ENCODE measurements at regions of chr10 and their contacts with region 1.

Region 1: GRCh38 chr10:61992671-61993668 is 91.5 kb downstream of the ARID5B start:
- DNase-seq: peak; percentile 86
- ATAC-seq: peak; percentile 77
- H3K4me3 ChIP-seq: peak overlapping the region in 1 of 5 experiments; percentile 42
- H3K4me3 Mint-ChIP-seq: peak overlapping the region; percentile 73
- H3K27ac ChIP-seq: peak overlapping the region; percentile 74 to 80
- H3K27ac Mint-ChIP-seq: peak overlapping the region; percentile 92
- H3K4me1 ChIP-seq: peaks cover 48 to 58% of the 10 kb centered on the region in 2 donors
- H3K4me1 Mint-ChIP-seq: peaks cover 85% of the 10 kb centered on the region
- H3K27me3 ChIP-seq: no peaks in the 10 kb centered on the region
- H3K27me3 Mint-ChIP-seq: no peaks in the 10 kb centered on the region
- CTCF ChIP-seq: no peak

Region 2: DNA sequence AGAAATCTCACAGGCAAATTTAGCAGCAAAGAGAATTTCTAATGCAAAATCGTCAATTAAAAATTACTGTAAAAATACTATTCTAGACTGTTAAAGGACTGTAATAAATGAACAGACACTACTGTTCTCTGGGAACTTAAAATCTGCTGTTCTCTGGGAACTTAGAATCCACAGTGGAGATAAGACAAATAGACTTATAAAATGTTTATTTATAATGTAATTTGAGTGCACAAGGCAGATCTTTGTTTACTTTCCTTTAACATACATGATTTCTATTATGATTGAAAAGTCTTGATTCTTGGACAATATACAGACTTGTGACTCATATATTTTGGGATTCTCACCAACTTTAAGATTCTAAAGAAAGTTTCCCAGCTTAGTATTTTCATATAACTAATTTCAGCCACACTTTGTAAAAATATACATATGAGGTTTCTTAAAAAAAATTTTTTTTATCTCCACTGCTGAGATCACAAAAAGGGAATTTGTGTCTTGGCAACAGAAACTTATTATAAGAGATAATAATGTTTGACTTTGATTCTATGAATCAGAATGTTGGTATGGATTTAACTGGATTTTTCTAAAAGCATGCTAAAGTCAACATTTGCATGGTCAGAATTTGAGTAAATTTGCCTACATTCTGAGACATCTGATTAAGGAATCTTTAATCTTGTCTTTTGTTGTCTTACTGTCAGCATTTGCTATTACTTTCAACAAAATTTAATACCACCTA is 882.6 kb before region 1 on chr10:
- CTCF ChIA-PET with region 1: no interaction called
- POLR2A ChIA-PET with region 1: interaction called, 11 read pairs
- intact Hi-C with region 1: no loop called
- DNase-seq: no peak
- ATAC-seq: no peak
- H3K4me3 ChIP-seq: no peak overlapping the region
- H3K4me3 Mint-ChIP-seq: no peak overlapping the region
- H3K27ac ChIP-seq: no peak overlapping the region
- H3K27ac Mint-ChIP-seq: no peak overlapping the region
- H3K4me1 ChIP-seq: no peaks in the 10 kb centered on the region
- H3K4me1 Mint-ChIP-seq: no peaks in the 10 kb centered on the region
- H3K27me3 ChIP-seq: peaks cover 0 to 4% (median 0%) of the 10 kb centered on the region in 4 experiments
- H3K27me3 Mint-ChIP-seq: peaks cover 22% of the 10 kb centered on the region
- CTCF ChIP-seq: no peak

Region 3: GRCh38 chr10:61896854-61897661 is 95.9 kb before region 1 on chr10:
- CTCF ChIA-PET with region 1: interaction called, 12 read pairs
- POLR2A ChIA-PET with region 1: interaction called, 19 read pairs
- intact Hi-C with region 1: loop called (anchors 2 kb)
- DNase-seq: peak; percentile 91
- ATAC-seq: peak; percentile 64
- H3K4me3 ChIP-seq: peak overlapping the region in 4 of 5 experiments; percentile 27 to 60 (median 48)
- H3K4me3 Mint-ChIP-seq: peak overlapping the region; percentile 98
- H3K27ac ChIP-seq: peak overlapping the region; percentile 38 to 47
- H3K27ac Mint-ChIP-seq: peak overlapping the region; percentile 94
- H3K4me1 ChIP-seq: peaks cover 29 to 33% of the 10 kb centered on the region in 2 donors
- H3K4me1 Mint-ChIP-seq: peaks cover 35% of the 10 kb centered on the region
- H3K27me3 ChIP-seq: no peaks in the 10 kb centered on the region
- H3K27me3 Mint-ChIP-seq: no peaks in the 10 kb centered on the region
- CTCF ChIP-seq: peak; percentile 77

Region 4: GRCh38 chr10:61923213-61923949 is 69.6 kb before region 1 on chr10:
- CTCF ChIA-PET with region 1: no interaction called
- POLR2A ChIA-PET with region 1: no interaction called
- intact Hi-C with region 1: no loop called
- DNase-seq: no peak
- ATAC-seq: no peak
- H3K4me3 ChIP-seq: no peak overlapping the region
- H3K4me3 Mint-ChIP-seq: no peak overlapping the region
- H3K27ac ChIP-seq: peak overlapping the region in 1 of 2 donors; percentile 56
- H3K27ac Mint-ChIP-seq: peak overlapping the region; percentile 69
- H3K4me1 ChIP-seq: peaks cover 17 to 22% of the 10 kb centered on the region in 2 donors
- H3K4me1 Mint-ChIP-seq: peaks cover 63% of the 10 kb centered on the region
- H3K27me3 ChIP-seq: no peaks in the 10 kb centered on the region
- H3K27me3 Mint-ChIP-seq: no peaks in the 10 kb centered on the region
- CTCF ChIP-seq: no peak

Region 5: GRCh38 chr10:62016623-62017490 is 23.9 kb after region 1 on chr10:
- CTCF ChIA-PET with region 1: interaction called, 4 read pairs
- POLR2A ChIA-PET with region 1: interaction called, 7 read pairs
- intact Hi-C with region 1: loop called (anchors 1 kb)
- DNase-seq: peak; percentile 88
- ATAC-seq: peak; percentile 71
- H3K4me3 ChIP-seq: peak overlapping the region in 3 of 5 experiments; percentile 10 to 50 (median 11)
- H3K4me3 Mint-ChIP-seq: peak overlapping the region; percentile 76
- H3K27ac ChIP-seq: peak overlapping the region; percentile 94 to 98
- H3K27ac Mint-ChIP-seq: peak overlapping the region; percentile 93
- H3K4me1 ChIP-seq: peaks cover 75 to 76% of the 10 kb centered on the region in 2 donors
- H3K4me1 Mint-ChIP-seq: peaks cover 80% of the 10 kb centered on the region
- H3K27me3 ChIP-seq: no peaks in the 10 kb centered on the region
- H3K27me3 Mint-ChIP-seq: no peaks in the 10 kb centered on the region
- CTCF ChIP-seq: no peak

Measured in B cell (primary cell).